Panc1 (cell line): ENCODE measurements at regions of chr4 and their contacts with region 1.

Region 1: GRCh38 chr4:112266821-112267220 is 18.9 kb downstream of the TIFA start:
- DNase-seq: no peak
- ATAC-seq: no peak
- H3K4me3 ChIP-seq: no peak overlapping the region
- H3K27ac ChIP-seq: no peak overlapping the region
- H3K4me1 ChIP-seq: no peaks in the 10 kb centered on the region
- H3K27me3 ChIP-seq: no peaks in the 10 kb centered on the region
- CTCF ChIP-seq: peak; percentile 33; the same call in 1 of the 2 replicates

Region 2: GRCh38 chr4:112130906-112131305 is 135.9 kb before region 1 on chr4:
- CTCF ChIA-PET with region 1: no interaction called
- POLR2A ChIA-PET with region 1: no interaction called
- in situ Hi-C with region 1: no loop called
- intact Hi-C with region 1: no loop called
- DNase-seq: no peak
- ATAC-seq: no peak
- H3K4me3 ChIP-seq: no peak overlapping the region
- H3K27ac ChIP-seq: no peak overlapping the region
- H3K4me1 ChIP-seq: no peaks in the 10 kb centered on the region
- H3K27me3 ChIP-seq: peaks cover 2% of the 10 kb centered on the region; the same call in 1 of the 2 replicates
- CTCF ChIP-seq: no peak

Region 3: DNA sequence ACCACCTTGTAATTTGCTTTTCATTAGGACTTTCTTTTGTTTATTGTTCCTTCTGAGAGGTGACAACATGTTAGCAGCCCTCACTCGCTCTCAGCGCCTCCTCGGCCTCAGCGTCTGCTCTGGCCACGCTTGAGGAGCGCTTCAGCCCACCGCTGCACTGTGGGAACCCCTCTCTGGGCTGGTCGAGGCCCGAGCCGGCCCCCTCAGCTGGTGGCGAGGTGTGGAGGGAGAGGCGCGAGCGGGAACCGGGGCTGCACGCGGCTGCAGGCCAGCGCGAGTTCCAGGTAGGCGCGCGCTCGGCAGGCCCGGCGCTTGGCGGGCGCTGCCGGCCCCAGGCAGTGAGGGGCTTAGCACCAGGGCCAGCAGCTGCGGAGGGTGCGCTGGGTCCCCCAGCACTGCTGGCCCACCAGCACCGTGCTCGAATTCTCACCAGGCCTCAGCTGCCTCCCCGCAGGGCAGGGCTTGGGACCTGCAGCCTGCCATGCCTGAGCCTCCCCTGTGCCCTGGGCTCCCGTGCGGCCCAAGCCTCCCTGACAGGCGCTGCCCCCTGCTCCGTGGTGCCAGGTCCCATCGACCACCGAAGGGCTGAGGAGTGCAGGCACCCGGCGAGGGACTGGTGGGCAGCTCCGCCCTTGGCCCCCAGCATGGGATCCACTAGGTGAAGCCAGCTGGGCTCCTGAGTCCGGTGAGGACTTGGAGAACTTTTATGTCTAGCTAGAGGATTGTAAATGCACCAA is 44.4 kb before region 1 on chr4:
- CTCF ChIA-PET with region 1: no interaction called
- POLR2A ChIA-PET with region 1: interaction called, 12 read pairs
- in situ Hi-C with region 1: no loop called
- intact Hi-C with region 1: no loop called
- DNase-seq: no peak
- ATAC-seq: no peak
- H3K4me3 ChIP-seq: no peak overlapping the region
- H3K27ac ChIP-seq: no peak overlapping the region
- H3K4me1 ChIP-seq: no peaks in the 10 kb centered on the region
- H3K27me3 ChIP-seq: no peaks in the 10 kb centered on the region
- CTCF ChIP-seq: no peak

Region 4: GRCh38 chr4:112279025-112279881 is 12.4 kb after region 1 on chr4:
- CTCF ChIA-PET with region 1: no interaction called
- POLR2A ChIA-PET with region 1: no interaction called
- in situ Hi-C with region 1: no loop called
- intact Hi-C with region 1: no loop called
- DNase-seq: no peak
- ATAC-seq: no peak
- H3K4me3 ChIP-seq: no peak overlapping the region
- H3K27ac ChIP-seq: no peak overlapping the region
- H3K4me1 ChIP-seq: peaks cover 2% of the 10 kb centered on the region; the same call in 1 of the 2 replicates
- H3K27me3 ChIP-seq: no peaks in the 10 kb centered on the region
- CTCF ChIP-seq: no peak